Cardiac septum (tissue), 1 donor: ENCODE measurements at regions of chr15 and their contacts with region 1.

Region 1: DNA sequence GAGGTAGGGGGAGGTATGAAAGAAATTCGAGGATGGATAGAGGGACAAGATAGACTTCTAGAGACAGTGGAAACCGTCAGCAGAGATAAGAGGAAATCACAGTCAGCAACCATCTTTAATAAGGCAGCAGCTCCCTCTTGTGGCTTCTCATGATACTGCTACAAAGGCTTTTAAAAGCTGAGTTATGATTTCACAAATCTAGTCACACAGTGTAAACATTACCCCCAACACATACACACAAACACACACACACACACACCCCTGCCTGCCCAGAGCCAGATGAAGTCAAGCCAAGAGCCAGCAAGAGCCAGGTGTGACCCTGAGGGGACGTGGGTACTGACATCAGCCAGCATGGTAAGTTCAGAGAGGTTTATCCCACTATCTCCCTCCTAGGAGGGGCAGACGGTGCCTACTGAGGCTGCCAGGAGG is 18.9 kb upstream of the TGM5 start:
- DNase-seq: no peak

Region 2: GRCh38 chr15:43225201-43225949 is 60.2 kb before region 1 on chr15:
- intact Hi-C with region 1: loop called (anchors 2 kb)
- DNase-seq: no peak